AG04450 (cell line): ENCODE measurements at regions of chr6 and their contacts with region 1.

Region 1: GRCh38 chr6:52858416-52858815 is 17.8 kb upstream of the GSTA5 start:
- DNase-seq: no peak
- H3K4me3 ChIP-seq: no peak overlapping the region
- H3K27ac ChIP-seq: no peak overlapping the region
- H3K27me3 ChIP-seq: peaks cover 3% of the 10 kb centered on the region
- CTCF ChIP-seq: no peak

Region 2: DNA sequence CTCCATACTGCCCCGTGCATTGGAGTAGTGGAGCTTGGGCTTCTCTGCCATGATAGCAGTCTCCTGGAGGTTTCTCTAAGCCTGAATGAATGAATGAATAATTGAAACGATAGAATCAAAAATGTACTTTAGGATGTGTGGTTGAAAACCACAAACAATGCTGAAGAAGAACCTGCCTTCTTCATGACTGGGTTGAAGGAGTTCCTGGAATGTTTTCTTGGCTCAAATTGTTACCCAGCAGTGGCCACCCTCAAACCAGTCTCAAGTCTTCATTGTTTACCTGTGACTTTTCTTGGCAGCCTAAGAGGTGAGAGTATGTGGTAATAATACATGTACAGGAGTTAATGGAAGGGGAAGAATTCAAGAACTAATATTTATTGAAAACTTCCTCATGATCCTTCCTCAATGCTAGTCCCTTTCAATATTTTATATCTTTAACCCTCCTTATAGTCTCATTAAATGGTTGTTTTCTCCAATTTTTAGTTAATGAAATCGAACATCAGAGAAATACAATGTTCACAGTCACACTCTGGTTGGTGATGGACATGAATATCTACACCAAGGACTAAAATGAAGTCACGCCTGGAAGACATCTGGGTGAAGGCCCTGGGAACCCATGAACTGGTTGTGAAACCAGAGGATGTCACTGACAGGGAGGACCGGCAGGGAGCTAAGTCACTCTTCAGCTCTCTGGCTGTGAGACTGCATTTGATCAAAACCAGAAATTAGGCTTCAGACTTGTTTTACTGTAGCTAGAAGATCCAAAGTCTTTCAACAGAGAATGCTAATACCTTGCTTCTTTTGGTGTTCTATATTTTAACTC is 17.4 kb before region 1 on chr6 and contains the start of gene GSTA5:
- CTCF ChIA-PET with region 1: no interaction called
- POLR2A ChIA-PET with region 1: no interaction called
- DNase-seq: no peak
- H3K4me3 ChIP-seq: no peak within 1 kb of the TSS
- H3K27ac ChIP-seq: no peak within 1 kb of the TSS
- H3K27me3 ChIP-seq: peaks cover 24% of the 10 kb centered on the region
- CTCF ChIP-seq: no peak
- polyA plus RNA-seq, gene GSTA5: not detected in 2 replicates

Region 3: GRCh38 chr6:52881662-52881995 is 23.2 kb after region 1 on chr6:
- CTCF ChIA-PET with region 1: interaction called, 10 read pairs
- POLR2A ChIA-PET with region 1: no interaction called
- DNase-seq: no peak
- H3K4me3 ChIP-seq: no peak overlapping the region
- H3K27ac ChIP-seq: no peak overlapping the region
- H3K27me3 ChIP-seq: no peaks in the 10 kb centered on the region
- CTCF ChIP-seq: no peak

Region 4: DNA sequence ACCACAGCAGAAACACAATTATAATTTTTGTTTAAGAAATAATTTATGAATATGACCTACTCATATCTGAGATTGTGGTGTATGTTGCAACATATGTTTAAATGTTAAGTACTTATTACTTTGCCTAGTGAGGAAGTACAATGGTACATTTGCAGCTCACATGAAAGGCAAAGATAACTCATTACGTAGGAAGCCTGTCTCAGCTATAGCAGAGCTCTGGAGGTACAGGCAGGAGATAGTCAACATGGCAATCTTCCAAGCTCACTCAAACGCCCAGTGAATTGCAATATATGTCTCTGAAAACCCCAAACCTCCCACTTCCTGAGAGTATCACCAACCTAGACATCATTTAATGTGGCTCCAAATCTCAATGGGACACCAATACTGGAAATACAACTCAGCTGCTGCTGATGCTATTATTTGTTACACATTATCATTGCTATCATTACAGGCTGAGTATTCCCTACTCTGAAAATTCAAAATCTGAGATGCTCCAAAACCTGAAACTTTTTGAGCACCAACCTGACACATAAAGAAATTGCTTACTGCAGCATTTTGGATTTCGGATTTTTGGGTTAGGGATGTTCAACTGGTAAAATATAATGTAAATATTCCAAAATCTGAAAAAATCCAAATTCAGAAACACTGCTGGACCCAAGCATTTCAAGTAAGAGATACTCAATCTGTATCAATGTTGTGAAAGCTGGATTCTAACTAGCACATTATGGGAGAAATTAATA is 161.8 kb after region 1 on chr6:
- CTCF ChIA-PET with region 1: no interaction called
- POLR2A ChIA-PET with region 1: no interaction called
- DNase-seq: no peak
- H3K4me3 ChIP-seq: no peak overlapping the region
- H3K27ac ChIP-seq: no peak overlapping the region
- H3K27me3 ChIP-seq: no peaks in the 10 kb centered on the region
- CTCF ChIP-seq: no peak